Caco-2 (cell line): ENCODE measurements at regions of chr16 and their contacts with region 1.

Region 1: DNA sequence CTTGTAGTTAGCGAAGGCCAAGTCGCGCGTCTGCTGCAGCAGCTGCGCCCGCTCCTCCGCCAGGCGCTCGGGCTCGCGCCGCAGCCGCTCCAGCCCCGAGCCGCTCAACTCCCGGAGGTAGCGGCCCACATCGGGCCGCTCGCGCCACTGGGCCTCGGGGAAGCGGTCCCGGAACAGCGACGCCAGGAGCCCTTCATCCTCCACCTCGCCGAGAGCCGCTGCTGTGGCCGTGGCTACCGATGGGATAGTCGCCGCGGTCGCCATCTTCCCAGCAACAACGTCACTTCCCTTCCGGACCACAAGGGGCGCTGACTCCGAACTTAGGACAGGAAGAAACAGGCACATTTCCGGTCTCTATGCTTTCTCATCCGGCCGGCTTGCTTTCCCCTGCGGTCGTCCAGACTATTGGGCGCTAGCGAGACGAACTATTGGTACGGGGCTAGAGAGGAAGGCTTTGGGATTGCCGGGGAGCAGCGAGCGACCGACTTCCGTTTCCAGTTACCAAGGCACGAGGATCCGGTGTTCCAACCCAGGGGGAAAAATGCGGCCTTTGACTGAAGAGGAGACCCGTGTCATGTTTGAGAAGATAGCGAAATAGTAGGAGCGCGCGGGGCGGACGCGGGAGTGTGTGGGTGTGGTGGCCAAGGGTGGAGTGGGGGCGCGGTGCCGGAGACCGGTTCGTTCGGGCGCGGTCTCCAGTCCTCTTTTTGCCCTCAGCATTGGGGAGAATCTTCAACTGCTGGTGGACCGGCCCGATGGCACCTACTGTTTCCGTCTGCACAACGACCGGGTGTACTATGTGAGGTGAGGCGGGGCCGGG is at the starts of genes COG8 and NIP7:
- DNase-seq: peak; percentile 98 to 99
- H3K4me3 ChIP-seq: peak within 1 kb of the TSS; percentile 81
- H3K4me3 Mint-ChIP-seq: peak within 1 kb of the TSS; percentile 98
- H3K27ac Mint-ChIP-seq: peak within 1 kb of the TSS; percentile 98
- H3K4me1 ChIP-seq: peaks cover 14% of the 10 kb centered on the region; the same call in 1 of the 2 replicates
- H3K4me1 Mint-ChIP-seq: peaks cover 12% of the 10 kb centered on the region
- H3K27me3 ChIP-seq: no peaks in the 10 kb centered on the region
- H3K27me3 Mint-ChIP-seq: no peaks in the 10 kb centered on the region
- CTCF ChIP-seq: peak; percentile 85 to 93
- total RNA-seq, gene COG8: 57.4 and 59.1 TPM in 2 replicates
- total RNA-seq, gene NIP7: 65.6 TPM in 2 replicates

Region 2: GRCh38 chr16:69253870-69254341 is 85.6 kb before region 1 on chr16:
- CTCF ChIA-PET with region 1: no interaction called
- POLR2A ChIA-PET with region 1: no interaction called
- intact Hi-C with region 1: no loop called
- DNase-seq: no peak
- H3K4me3 ChIP-seq: no peak overlapping the region
- H3K4me3 Mint-ChIP-seq: no peak overlapping the region
- H3K27ac Mint-ChIP-seq: peak overlapping the region; percentile 35
- H3K4me1 ChIP-seq: no peaks in the 10 kb centered on the region
- H3K4me1 Mint-ChIP-seq: peaks cover 10% of the 10 kb centered on the region
- H3K27me3 ChIP-seq: no peaks in the 10 kb centered on the region
- H3K27me3 Mint-ChIP-seq: no peaks in the 10 kb centered on the region
- CTCF ChIP-seq: no peak

Region 3: DNA sequence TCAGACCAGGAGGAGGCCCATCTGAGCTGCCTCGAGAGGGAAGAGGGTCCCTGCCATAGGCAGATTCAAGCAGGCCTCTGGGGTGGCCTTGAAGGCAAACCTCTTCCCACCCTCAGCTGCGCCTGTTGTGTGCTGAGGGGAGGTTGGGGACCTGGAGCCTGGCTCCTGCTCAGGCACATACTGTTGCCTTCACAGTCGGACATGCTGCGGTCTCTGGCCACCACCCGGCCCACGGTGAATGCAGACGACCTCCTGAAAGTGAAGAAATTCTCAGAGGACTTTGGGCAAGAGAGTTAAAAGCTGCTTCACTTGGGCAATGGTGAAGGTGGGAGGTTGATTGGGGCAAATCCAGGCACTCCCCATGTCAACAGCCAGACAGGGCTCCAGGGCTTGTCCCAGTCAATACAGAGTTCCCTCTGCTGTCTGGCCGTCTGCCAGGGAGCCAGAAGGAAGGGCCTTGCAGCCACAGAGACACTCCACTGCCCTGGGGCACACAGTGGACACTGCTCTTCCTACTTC is 15.4 kb before region 1 on chr16:
- CTCF ChIA-PET with region 1: no interaction called
- POLR2A ChIA-PET with region 1: no interaction called
- intact Hi-C with region 1: no loop called
- DNase-seq: no peak
- H3K4me3 ChIP-seq: no peak overlapping the region
- H3K4me3 Mint-ChIP-seq: no peak overlapping the region
- H3K27ac Mint-ChIP-seq: no peak overlapping the region
- H3K4me1 ChIP-seq: peaks cover 22% of the 10 kb centered on the region
- H3K4me1 Mint-ChIP-seq: peaks cover 29% of the 10 kb centered on the region
- H3K27me3 ChIP-seq: no peaks in the 10 kb centered on the region
- H3K27me3 Mint-ChIP-seq: no peaks in the 10 kb centered on the region
- CTCF ChIP-seq: no peak

Region 4: DNA sequence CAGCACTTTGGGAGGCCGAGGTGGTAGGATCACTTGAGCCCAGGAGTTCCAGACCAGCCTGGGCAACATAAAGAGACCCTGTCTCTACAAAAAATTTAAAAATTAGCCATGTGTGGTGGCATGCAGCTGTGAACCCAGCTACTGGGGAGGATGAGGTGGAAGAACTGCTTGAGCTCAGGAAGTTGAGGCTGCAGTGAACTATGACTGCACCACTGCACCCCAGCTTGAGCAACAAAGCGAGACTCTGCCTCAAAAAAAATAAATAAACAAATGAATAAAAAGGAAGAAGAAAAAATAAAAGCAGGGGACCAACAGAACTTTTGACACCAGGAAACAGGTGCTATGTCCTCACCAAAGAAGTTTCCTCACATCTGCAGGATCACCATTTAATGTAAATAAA is 32.1 kb after region 1 on chr16:
- CTCF ChIA-PET with region 1: no interaction called
- POLR2A ChIA-PET with region 1: no interaction called
- intact Hi-C with region 1: loop called (anchors 5 kb)
- DNase-seq: no peak
- H3K4me3 ChIP-seq: no peak overlapping the region
- H3K4me3 Mint-ChIP-seq: no peak overlapping the region
- H3K27ac Mint-ChIP-seq: no peak overlapping the region
- H3K4me1 ChIP-seq: peaks cover 16% of the 10 kb centered on the region
- H3K4me1 Mint-ChIP-seq: peaks cover 14% of the 10 kb centered on the region
- H3K27me3 ChIP-seq: no peaks in the 10 kb centered on the region
- H3K27me3 Mint-ChIP-seq: no peaks in the 10 kb centered on the region
- CTCF ChIP-seq: no peak

Region 5: DNA sequence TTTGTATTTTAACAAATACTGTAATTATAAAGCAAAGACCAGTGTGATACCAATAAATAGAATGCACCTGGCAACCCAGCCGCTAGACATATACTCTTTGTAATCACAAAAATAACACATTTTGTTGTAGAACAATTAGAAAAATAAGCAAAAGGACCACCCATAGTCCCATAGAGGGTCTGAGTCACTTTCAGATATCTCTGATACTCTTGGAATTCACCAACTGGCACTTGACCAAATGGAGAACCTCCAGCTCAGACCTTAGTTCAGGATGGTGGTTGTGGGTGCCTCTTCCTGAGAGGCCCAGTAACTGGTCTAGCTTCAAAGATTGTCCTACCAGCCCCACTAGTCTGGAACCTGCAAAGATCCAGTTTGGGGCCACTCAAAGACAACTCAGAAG is 47.1 kb after region 1 on chr16:
- CTCF ChIA-PET with region 1: no interaction called
- POLR2A ChIA-PET with region 1: no interaction called
- intact Hi-C with region 1: loop called (anchors 5 kb)
- DNase-seq: no peak
- H3K4me3 ChIP-seq: no peak overlapping the region
- H3K4me3 Mint-ChIP-seq: peak overlapping the region; percentile 89
- H3K27ac Mint-ChIP-seq: no peak overlapping the region
- H3K4me1 ChIP-seq: peaks cover 8% of the 10 kb centered on the region
- H3K4me1 Mint-ChIP-seq: peaks cover 26% of the 10 kb centered on the region
- H3K27me3 ChIP-seq: no peaks in the 10 kb centered on the region
- H3K27me3 Mint-ChIP-seq: no peaks in the 10 kb centered on the region
- CTCF ChIP-seq: no peak